ENCODE measurements at regions of chr5 and their contacts with region 1.

Region 1: DNA sequence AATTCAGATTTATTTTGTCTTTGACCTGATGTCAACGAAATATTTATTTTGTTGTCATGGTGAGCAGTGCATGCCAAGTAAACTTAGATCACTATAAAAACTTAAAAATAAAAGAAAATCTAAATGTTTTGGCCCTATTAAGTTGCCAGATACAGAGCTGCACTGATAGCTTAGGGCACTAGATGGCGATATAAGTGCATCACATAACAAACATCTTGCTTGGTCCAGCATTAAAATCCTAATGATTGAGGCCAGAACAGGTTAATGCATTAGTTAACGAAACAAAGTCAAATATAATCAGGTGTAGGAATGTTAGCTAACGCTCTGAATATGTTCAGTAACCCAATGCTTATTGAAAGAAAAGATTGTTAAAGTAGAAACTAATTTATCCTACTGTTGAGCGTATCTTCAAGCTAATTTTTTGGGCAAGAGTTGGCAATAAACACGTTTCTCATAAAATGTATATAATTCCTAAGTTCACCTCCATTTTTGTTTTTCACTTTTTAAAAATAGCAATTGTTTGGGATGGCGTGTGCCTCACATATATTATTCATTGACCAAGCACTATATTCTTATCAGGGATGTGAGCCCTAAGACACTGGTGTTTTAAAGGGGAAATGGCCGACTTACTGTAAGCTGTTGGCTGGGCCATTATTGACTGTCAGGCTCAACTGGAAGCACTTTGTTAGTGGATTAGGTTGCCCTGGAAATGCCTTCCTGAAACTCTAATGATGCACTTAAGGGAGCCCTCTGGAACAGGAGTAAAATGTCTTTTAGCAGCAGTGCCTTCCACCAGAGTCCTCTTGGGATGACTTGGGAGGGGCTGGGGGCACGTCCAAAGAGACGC is 33.3 kb downstream of the KCTD16 start:
- DNase-seq: peak; percentile 34
- H3K4me3 ChIP-seq: peak overlapping the region in 1 of 2 experiments; percentile 28; a peak in 1 of 4 replicates
- H3K27ac ChIP-seq: no peak overlapping the region
- H3K4me1 ChIP-seq: peaks cover 0 to 7% of the 10 kb centered on the region in 2 experiments; a peak in 2 of 4 replicates
- H3K27me3 ChIP-seq: no peaks in the 10 kb centered on the region
- CTCF ChIP-seq: peak; percentile 98
- EP300 ChIP-seq: no peak
- RAD21 ChIP-seq: peak; percentile 98

Region 2: GRCh38 chr5:143886651-143887638 is 317.0 kb before region 1 on chr5:
- CTCF ChIA-PET with region 1: no interaction called
- POLR2A ChIA-PET with region 1: no interaction called
- DNase-seq: peak; percentile 63
- H3K4me3 ChIP-seq: no peak overlapping the region; a peak in 1 of 4 replicates
- H3K27ac ChIP-seq: peak overlapping the region; percentile 85 to 98
- H3K4me1 ChIP-seq: peaks cover 21 to 32% of the 10 kb centered on the region in 2 experiments
- H3K27me3 ChIP-seq: no peaks in the 10 kb centered on the region
- CTCF ChIP-seq: no peak
- EP300 ChIP-seq: peak; percentile 70 to 77; a peak in 3 of 4 replicates
- RAD21 ChIP-seq: peak; percentile 39; the same call in 1 of the 2 replicates

Region 3: GRCh38 chr5:144191998-144192397 is 12.0 kb before region 1 on chr5:
- CTCF ChIA-PET with region 1: interaction called, 23 read pairs
- POLR2A ChIA-PET with region 1: no interaction called
- DNase-seq: no peak
- H3K4me3 ChIP-seq: peak overlapping the region in 1 of 2 experiments; percentile 29; a peak in 1 of 4 replicates
- H3K27ac ChIP-seq: no peak overlapping the region
- H3K4me1 ChIP-seq: peaks cover 8 to 20% of the 10 kb centered on the region in 2 experiments; a peak in 3 of 4 replicates
- H3K27me3 ChIP-seq: no peaks in the 10 kb centered on the region
- CTCF ChIP-seq: peak; percentile 61
- EP300 ChIP-seq: no peak
- RAD21 ChIP-seq: peak; percentile 35

Region 4: GRCh38 chr5:145237843-145238242 is 1033.9 kb after region 1 on chr5:
- CTCF ChIA-PET with region 1: interaction called, 58 read pairs
- POLR2A ChIA-PET with region 1: no interaction called
- DNase-seq: peak; percentile 19
- H3K4me3 ChIP-seq: no peak overlapping the region; a peak in 1 of 4 replicates
- H3K27ac ChIP-seq: no peak overlapping the region
- H3K4me1 ChIP-seq: peaks cover 0 to 5% of the 10 kb centered on the region in 2 experiments; a peak in 2 of 4 replicates
- H3K27me3 ChIP-seq: no peaks in the 10 kb centered on the region
- CTCF ChIP-seq: peak; percentile 58
- EP300 ChIP-seq: no peak
- RAD21 ChIP-seq: peak; percentile 81

Region 5: GRCh38 chr5:145347026-145347616 is 1143.1 kb after region 1 on chr5:
- CTCF ChIA-PET with region 1: interaction called, 14 read pairs
- POLR2A ChIA-PET with region 1: no interaction called
- DNase-seq: peak; percentile 24
- H3K4me3 ChIP-seq: no peak overlapping the region; a peak in 1 of 4 replicates
- H3K27ac ChIP-seq: no peak overlapping the region
- H3K4me1 ChIP-seq: peaks cover 0 to 8% of the 10 kb centered on the region in 2 experiments; a peak in 2 of 4 replicates
- H3K27me3 ChIP-seq: no peaks in the 10 kb centered on the region
- CTCF ChIP-seq: peak; percentile 70
- EP300 ChIP-seq: no peak
- RAD21 ChIP-seq: peak; percentile 70

Measured in SK-N-SH (cell line).